GM23248 (cell line): ENCODE measurements at regions of chr9 and their contacts with region 1.

Region 1: DNA sequence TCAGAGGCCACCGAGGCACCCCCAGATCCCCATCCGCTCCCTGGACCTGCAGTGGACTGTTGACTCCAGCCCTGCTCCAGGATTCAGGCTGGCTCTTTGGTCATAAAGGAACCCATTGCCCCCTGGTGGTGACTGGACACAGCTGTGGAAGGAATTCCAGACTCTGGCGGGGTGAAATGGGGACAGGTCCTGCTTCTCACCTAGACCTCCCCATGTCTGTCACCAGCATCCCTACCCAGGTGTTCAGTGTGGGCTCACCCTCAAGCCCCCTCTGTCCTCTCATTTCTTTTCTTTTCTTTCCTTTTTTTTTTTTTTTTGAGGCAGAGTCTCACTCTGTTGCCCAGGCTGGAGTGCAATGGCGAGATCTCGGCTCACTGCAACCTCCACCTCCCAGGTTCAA is 25.5 kb upstream of the STXBP1 start:
- DNase-seq: peak; percentile 94
- H3K4me3 ChIP-seq: no peak overlapping the region
- H3K27ac ChIP-seq: no peak overlapping the region
- H3K4me1 ChIP-seq: peaks cover 17% of the 10 kb centered on the region
- H3K27me3 ChIP-seq: no peaks in the 10 kb centered on the region

Region 2: DNA sequence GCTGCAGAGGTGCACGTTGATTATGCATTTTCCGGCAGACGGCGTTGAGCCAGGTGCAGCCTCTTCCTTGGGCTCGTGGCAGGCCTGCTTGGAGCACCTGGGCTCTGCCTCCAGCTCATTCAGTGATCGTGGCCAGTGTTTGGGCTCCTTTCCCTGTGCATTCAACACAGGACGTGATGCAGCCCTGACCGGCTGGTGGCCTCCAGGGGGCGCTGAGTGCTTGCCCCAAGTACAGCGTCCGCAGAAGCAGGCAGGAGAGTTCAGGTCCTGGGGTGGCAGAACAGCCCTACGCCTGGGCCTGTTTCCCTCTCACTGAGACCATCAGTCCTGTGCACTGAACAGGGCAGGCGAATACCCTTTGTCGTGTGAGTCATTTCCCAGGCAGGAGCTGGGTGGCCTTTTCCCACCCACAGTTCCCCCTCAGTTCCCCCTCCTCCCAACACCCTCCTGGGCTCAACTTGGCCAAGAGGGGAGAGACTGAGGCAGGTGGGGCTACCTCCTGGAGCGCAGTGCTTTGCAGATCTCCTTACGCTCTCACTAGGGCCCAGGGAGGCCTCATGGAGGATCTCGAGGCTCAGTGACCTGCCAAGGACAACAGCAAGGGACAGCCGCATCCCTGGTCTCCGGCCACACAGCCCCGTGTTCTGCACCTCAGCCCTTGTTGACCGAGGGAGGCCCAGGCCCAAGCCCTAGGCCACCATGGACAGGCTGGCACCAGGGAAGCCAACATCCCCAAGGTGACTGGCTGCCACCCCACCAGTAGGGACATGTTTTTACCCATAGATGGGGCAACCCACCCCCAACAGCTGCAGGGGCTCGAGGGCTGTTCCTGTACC is 82.4 kb before region 1 on chr9:
- in situ Hi-C with region 1: loop called (anchors 5 kb)
- DNase-seq: peak; percentile 83
- H3K4me3 ChIP-seq: no peak overlapping the region
- H3K27ac ChIP-seq: peak overlapping the region; percentile 46
- H3K4me1 ChIP-seq: no peaks in the 10 kb centered on the region
- H3K27me3 ChIP-seq: no peaks in the 10 kb centered on the region

Region 3: DNA sequence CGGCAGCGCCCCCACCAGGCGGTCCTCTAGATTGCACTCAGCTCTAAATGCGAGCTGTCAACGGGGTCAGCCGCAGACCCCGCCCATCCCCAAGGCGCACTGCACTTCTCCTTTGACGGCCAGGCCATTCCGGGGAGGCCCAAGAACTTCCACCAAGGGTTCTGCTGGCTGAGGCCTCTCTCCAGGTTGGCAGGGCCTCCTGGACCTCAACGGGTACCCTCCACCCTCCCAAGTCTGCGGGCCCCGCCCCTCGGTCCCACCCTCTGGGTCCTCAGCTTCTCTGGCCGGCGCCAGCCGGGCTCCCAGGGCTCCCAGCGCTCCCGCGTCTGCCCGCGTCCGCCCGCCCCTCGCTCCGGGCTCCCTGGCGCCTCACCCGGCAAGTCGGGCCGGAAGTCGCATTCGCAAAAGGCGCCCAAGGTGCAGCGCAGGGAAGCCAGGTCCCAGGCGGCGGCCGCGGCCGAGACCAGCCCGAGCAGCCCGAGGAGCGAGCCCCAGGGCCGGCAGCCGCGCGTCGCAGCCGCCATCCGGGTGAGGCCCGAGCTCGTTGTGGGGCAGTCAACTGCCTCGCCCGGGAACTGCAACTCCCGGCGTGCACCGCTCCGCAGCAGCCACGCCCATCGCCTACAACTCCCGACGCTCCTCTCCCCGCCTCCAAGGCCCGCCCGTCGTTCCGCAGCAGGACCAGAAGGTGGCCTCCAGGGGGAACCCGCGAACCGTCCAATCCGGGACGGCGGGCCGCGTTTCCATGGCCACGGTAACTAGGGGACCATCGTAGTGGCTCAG is 148.4 kb after region 1 on chr9 and contains the start of gene TOR2A:
- in situ Hi-C with region 1: loop called (anchors 10 kb)
- DNase-seq: peak; percentile 99
- H3K4me3 ChIP-seq: peak within 1 kb of the TSS; percentile 80
- H3K27ac ChIP-seq: peak within 1 kb of the TSS; percentile 67
- H3K4me1 ChIP-seq: peaks cover 11% of the 10 kb centered on the region
- H3K27me3 ChIP-seq: no peaks in the 10 kb centered on the region
- total RNA-seq, gene TOR2A: 2.9 and 9.0 TPM in 2 replicates